ENCODE measurements at regions of chr2 and their contacts with region 1.

Region 1: GRCh38 chr2:155842103-155842502 is 490.4 kb downstream of the NR4A2 start:
- DNase-seq: no peak

Region 2: GRCh38 chr2:155377266-155377680 is 464.8 kb before region 1 on chr2:
- in situ Hi-C with region 1: loop called (anchors 25 kb)
- DNase-seq: peak; percentile 43